ENCODE measurements at regions of chr6 and their contacts with region 1.

Region 1: GRCh38 chr6:100176311-100176950 is 182.4 kb upstream of the MCHR2 start:
- DNase-seq: peak; percentile 53
- H3K4me3 ChIP-seq: no peak overlapping the region; the same call in 1 of the 2 replicates
- H3K27me3 ChIP-seq: no peaks in the 10 kb centered on the region
- CTCF ChIP-seq: peak; percentile 59

Region 2: DNA sequence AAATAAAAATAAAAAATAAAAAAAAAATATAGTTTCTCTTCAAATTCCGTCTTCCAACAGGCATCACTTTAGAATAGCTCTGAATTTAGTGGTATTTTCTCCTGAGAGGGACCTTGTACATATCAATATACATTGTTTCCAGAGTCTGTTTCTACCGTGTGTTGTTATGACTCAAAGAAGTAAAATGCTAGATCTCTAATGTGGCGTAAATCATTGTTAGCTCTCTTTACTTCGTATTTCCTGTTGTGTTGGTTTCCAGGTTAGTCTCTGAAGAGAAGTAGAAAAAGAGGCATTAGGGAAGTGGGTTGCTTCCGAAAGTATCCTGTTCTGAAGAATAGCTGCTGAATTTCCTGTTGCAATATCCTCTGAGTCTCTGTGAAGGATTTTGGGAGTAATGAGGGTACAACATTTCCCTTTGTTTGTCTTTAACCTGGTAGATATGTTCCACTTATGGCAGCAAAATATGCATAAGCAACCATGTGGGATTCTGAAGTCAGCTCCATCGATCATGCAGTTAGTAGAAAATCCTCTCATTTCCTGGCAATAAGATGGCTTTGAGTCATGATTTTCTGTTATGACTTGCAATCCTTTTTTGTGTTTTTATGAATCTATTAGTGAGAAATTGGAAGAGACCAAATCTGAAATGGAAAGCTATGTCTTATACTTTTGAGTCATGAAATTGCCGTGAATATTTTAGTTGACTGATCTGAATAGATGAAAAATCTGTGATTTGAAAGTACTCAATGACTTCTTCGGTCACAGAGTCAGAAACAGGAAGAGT is 140.4 kb before region 1 on chr6:
- CTCF ChIA-PET with region 1: no interaction called
- POLR2A ChIA-PET with region 1: no interaction called
- DNase-seq: no peak
- H3K4me3 ChIP-seq: no peak overlapping the region
- H3K27me3 ChIP-seq: no peaks in the 10 kb centered on the region; the same call in 1 of the 2 replicates
- CTCF ChIP-seq: no peak

Region 3: GRCh38 chr6:100155141-100155540 is 21.3 kb before region 1 on chr6:
- CTCF ChIA-PET with region 1: no interaction called
- POLR2A ChIA-PET with region 1: no interaction called
- DNase-seq: no peak
- H3K4me3 ChIP-seq: no peak overlapping the region
- H3K27me3 ChIP-seq: no peaks in the 10 kb centered on the region
- CTCF ChIP-seq: no peak

Region 4: GRCh38 chr6:100446115-100447080 is 270.0 kb after region 1 on chr6:
- CTCF ChIA-PET with region 1: interaction called, 10 read pairs
- POLR2A ChIA-PET with region 1: interaction called, 3 read pairs
- DNase-seq: no peak
- H3K4me3 ChIP-seq: peak overlapping the region; percentile 39
- H3K27me3 ChIP-seq: no peaks in the 10 kb centered on the region
- CTCF ChIP-seq: no peak

Region 5: DNA sequence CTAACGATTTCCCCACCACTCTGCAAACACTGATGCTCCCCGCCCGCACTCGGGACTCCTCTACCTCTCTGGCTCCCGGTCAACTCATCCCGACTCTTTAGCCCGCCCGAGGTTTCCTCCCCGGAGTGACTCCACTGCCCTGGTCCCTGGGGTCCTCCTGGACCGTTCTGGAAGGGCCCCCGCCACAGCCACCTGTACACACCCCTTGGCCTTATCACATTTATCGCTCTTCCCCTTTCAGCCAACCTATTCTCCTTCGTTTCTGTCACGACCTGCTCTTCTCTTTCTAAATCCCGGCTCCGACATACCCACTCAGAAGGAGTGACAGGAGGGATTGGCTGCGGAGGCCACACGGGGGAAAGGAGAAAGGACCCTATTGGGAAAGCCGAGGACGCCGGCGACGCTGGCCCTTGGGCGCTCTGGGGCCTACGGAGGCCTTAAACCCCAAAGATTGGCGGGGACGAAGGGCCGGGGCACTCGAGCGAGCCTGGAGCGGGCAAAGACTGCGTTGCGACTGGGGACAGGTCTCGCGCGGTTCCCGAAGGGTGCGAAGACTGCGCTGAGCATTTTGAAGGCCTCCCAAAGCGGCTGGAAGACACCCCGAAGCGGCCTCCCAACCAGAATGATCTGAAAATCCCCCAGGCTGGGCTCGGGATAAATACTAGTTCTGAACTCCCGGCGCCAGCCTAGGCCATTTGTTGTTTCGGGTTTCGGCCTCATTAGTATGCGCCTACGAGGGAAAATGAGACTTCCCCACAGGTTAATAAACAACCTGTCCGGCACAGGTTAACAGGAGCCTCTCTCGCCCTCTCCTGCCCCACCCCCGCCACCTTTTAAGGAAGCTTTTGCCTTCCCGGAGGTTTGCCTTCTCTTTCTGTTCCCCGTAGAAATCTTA is 279.0 kb after region 1 on chr6:
- CTCF ChIA-PET with region 1: interaction called, 47 read pairs
- POLR2A ChIA-PET with region 1: interaction called, 7 read pairs
- DNase-seq: no peak
- H3K4me3 ChIP-seq: peak overlapping the region; percentile 46
- H3K27me3 ChIP-seq: no peaks in the 10 kb centered on the region
- CTCF ChIP-seq: no peak